MCF 10A (cell line): ENCODE measurements at regions of chr20 and their contacts with region 1.

Region 1: GRCh38 chr20:52083627-52084232 is 107.8 kb downstream of the ZFP64 start:
- DNase-seq: peak; percentile 75
- H3K4me3 Mint-ChIP-seq: no peak overlapping the region
- H3K27ac Mint-ChIP-seq: no peak overlapping the region
- H3K4me1 Mint-ChIP-seq: peaks cover 11% of the 10 kb centered on the region
- H3K27me3 Mint-ChIP-seq: no peaks in the 10 kb centered on the region
- CTCF ChIP-seq: peak; percentile 84

Region 2: GRCh38 chr20:51372176-51372803 is 711.4 kb before region 1 on chr20:
- CTCF ChIA-PET with region 1: interaction called, 9 read pairs
- POLR2A ChIA-PET with region 1: no interaction called
- intact Hi-C with region 1: loop called (anchors 1 kb)
- DNase-seq: peak; percentile 75
- H3K4me3 Mint-ChIP-seq: no peak overlapping the region
- H3K27ac Mint-ChIP-seq: no peak overlapping the region
- H3K4me1 Mint-ChIP-seq: no peaks in the 10 kb centered on the region
- H3K27me3 Mint-ChIP-seq: no peaks in the 10 kb centered on the region
- CTCF ChIP-seq: peak; percentile 90

Region 3: DNA sequence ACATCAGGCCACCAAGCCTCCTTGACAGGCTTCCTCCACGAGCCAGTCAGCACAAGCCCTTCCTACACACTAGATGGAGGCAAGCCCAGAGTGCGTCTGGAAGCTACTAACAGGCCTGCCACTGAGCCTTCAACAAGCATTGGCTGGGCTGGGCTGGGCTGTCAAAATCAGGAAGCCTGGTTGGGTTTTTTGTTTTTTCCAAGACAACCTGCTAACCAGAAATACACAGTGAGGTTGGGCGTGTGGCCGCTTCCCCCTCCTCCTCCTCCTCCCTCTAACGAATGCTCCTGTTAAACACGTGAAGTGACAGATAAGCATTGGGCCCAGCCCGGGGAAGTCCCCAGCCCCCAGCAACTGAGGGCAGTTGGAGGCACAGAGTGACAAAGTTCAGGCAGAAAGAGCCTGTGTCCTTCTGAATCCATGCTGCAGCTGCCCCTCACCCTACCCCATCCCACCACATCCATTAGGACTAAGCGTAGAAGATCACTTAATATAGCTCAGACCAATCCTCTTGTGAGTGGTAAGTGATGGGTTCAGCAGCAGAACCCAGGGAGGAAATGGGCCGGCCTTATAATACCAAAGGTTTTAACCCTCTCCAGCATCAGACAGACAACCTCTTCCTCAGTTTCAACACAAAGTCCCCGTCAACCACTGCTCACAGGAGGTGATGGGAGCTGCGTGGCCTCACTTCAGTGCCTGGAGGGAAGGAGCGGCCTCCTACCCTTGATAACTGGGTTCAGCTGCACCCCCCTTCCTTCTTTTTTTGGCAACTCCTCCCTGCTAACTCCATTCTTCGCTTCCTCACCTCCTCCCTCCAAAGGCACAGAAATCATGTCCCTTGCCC is 542.3 kb before region 1 on chr20:
- CTCF ChIA-PET with region 1: no interaction called
- POLR2A ChIA-PET with region 1: no interaction called
- intact Hi-C with region 1: no loop called
- DNase-seq: no peak
- H3K4me3 Mint-ChIP-seq: no peak overlapping the region
- H3K27ac Mint-ChIP-seq: no peak overlapping the region
- H3K4me1 Mint-ChIP-seq: no peaks in the 10 kb centered on the region
- H3K27me3 Mint-ChIP-seq: peaks cover 92% of the 10 kb centered on the region
- CTCF ChIP-seq: no peak

Region 4: DNA sequence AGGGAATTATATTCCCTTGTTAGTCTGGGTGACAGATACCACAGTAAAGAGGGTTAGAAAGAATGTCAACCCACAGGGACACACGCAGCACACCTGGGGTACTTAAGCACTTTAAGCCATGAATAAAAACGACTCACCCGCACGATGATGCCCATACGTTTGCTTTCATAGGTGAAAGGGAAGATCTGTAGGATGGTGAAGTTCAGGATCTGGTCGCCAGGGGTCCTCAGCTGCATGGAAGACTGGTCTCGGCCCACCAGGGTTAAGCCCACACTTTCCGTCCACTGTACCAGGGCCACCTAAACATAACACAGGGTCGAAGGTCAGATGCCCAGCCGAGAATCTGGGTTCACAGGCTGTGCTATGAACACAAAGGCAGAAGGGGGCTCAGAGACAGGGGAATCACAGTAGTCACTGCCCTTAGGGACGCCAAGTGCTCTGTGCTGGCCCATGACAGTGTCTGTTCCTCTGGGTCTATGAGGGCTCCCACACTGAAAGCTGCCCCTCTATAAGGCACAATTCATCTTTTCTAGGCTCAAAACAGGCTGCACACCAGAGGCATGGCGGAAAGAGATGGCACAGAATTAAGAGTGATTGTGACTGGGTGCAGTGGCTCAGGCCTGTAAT is 444.4 kb before region 1 on chr20:
- CTCF ChIA-PET with region 1: interaction called, 134 read pairs
- POLR2A ChIA-PET with region 1: interaction called, 3 read pairs
- intact Hi-C with region 1: loop called (anchors 1 kb)
- DNase-seq: peak; percentile 76
- H3K4me3 Mint-ChIP-seq: no peak overlapping the region
- H3K27ac Mint-ChIP-seq: peak overlapping the region; percentile 53
- H3K4me1 Mint-ChIP-seq: no peaks in the 10 kb centered on the region
- H3K27me3 Mint-ChIP-seq: no peaks in the 10 kb centered on the region
- CTCF ChIP-seq: peak; percentile 91

Region 5: DNA sequence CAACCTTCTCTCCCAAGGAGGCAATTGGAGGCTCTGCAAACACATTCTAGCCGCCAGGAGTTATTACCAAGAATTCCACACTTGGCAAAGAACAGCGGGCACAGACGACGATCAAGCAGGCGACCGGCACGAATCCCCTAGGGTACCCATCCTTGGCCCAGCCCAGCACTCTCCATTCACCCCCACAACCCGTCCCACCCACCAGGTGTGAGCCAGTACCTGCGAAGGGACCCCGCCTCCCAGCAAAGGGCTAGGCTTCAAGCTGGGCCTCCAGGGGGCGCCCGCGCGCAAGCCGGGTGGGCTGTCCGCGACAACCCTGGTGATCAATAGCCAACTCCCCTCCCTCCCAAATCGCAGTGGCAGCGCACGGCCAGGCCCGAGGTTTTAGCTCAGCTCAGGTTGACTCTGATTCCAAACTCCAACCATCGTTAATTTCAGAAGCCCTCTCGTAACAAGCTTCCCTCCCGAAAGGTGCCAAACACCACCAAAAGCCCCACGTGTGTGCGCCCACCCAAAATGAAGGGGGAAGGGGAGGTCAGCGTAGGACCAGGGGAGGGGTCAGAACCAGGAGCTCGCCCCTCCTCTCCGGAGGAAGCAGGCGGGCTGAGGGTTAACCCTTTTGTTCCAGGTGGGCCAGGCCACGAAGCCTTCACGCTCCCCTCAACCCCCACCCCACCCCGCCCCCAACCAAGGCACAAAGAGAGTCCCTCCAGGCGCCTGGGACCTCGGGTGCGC is 283.5 kb before region 1 on chr20:
- CTCF ChIA-PET with region 1: interaction called, 97 read pairs
- POLR2A ChIA-PET with region 1: interaction called, 8 read pairs
- intact Hi-C with region 1: loop called (anchors 1 kb)
- DNase-seq: peak; percentile 59
- H3K4me3 Mint-ChIP-seq: peak overlapping the region; percentile 63
- H3K27ac Mint-ChIP-seq: no peak overlapping the region
- H3K4me1 Mint-ChIP-seq: no peaks in the 10 kb centered on the region
- H3K27me3 Mint-ChIP-seq: no peaks in the 10 kb centered on the region
- CTCF ChIP-seq: peak; percentile 82

Region 6: GRCh38 chr20:51984931-51985415 is 98.8 kb before region 1 on chr20:
- CTCF ChIA-PET with region 1: interaction called, 15 read pairs
- POLR2A ChIA-PET with region 1: interaction called, 5 read pairs
- intact Hi-C with region 1: no loop called
- DNase-seq: peak; percentile 93
- H3K4me3 Mint-ChIP-seq: peak overlapping the region; percentile 46
- H3K27ac Mint-ChIP-seq: peak overlapping the region; percentile 93
- H3K4me1 Mint-ChIP-seq: peaks cover 11% of the 10 kb centered on the region
- H3K27me3 Mint-ChIP-seq: no peaks in the 10 kb centered on the region
- CTCF ChIP-seq: no peak

Region 7: GRCh38 chr20:52094693-52095092 is 11.0 kb after region 1 on chr20:
- CTCF ChIA-PET with region 1: interaction called, 13 read pairs
- POLR2A ChIA-PET with region 1: no interaction called
- intact Hi-C with region 1: no loop called
- DNase-seq: no peak
- H3K4me3 Mint-ChIP-seq: no peak overlapping the region
- H3K27ac Mint-ChIP-seq: no peak overlapping the region
- H3K4me1 Mint-ChIP-seq: no peaks in the 10 kb centered on the region
- H3K27me3 Mint-ChIP-seq: no peaks in the 10 kb centered on the region
- CTCF ChIP-seq: no peak